AG04450 (cell line): ENCODE measurements at regions of chr4 and their contacts with region 1.

Region 1: GRCh38 chr4:6727081-6727942 is 11.3 kb downstream of the BLOC1S4 start:
- DNase-seq: no peak
- H3K4me3 ChIP-seq: no peak overlapping the region
- H3K27ac ChIP-seq: peak overlapping the region; percentile 39
- H3K27me3 ChIP-seq: no peaks in the 10 kb centered on the region
- CTCF ChIP-seq: no peak

Region 2: DNA sequence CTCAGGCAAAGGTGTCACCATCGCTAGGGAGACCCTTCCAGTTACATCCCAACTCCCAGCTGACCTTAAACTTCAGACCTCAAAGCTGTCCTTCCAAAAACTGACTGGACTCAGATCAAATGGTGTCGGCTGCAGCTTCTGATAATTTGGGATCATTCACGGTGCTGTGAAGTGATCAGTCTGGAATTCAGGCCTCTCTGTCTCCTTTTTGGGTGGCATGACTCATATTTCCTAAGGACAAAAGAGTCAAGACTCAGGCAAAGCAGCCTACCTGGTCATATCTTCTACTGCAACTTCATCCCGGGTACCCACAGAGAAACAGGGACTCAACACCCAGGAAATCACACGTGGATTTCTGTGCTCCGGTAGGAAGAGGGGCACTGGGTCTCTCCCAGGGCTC is 552.6 kb after region 1 on chr4:
- CTCF ChIA-PET with region 1: no interaction called
- POLR2A ChIA-PET with region 1: interaction called, 13 read pairs
- DNase-seq: no peak
- H3K4me3 ChIP-seq: no peak overlapping the region
- H3K27ac ChIP-seq: no peak overlapping the region
- H3K27me3 ChIP-seq: peaks cover 39% of the 10 kb centered on the region
- CTCF ChIP-seq: no peak